ENCODE measurements at regions of chr9 and their contacts with region 1.

Region 1: DNA sequence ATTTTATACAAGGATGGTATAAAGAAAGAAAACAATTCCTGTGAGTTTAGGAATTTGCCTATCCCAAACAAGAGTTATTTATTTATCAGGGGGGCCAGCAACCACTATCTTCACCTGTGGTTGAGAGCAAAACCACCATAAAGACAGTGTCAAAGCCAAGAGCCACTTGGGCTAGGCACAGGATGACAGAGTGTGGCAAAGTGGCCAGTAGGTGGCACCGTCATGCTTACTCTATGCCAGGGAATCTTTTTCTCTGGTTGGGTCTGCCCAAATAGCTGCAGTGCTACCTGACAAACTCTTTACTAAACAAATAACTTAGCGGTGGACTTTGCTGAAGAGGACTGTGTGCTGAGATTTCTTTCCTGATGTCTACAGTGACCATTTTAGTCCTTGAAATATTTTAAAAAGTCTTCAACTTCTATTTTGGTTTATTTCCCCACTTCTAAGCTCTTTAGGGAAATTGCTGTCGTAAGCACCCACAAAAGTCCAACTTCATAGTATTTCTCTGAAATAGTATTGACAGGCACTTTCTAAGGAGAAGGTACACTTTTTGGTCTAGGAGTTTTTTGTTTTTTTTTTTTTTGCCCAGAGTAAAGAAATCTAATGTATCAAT is 285.0 kb downstream of the RFX3 start:
- DNase-seq: peak; percentile 53
- ATAC-seq: peak; percentile 84 to 88

Region 2: DNA sequence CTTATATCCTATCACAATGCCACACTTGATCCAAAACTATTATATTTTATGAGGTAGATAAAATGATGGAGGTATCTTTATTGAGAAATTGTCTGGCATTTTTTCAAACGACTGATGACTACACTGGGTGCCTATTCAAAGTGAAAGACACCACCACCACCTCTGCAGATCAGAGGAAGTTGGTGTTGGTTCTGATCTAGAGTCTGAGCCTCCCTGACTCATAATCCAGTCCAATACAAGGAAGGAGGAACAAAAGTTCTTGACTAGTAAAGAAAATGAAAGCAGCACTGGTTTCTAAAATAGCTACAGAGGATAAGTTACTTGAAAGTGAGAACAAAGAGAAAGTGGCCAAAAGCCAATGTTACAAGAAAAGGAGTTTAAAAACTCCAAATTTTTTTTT is 145.1 kb after region 1 on chr9:
- intact Hi-C with region 1: no loop called
- DNase-seq: no peak
- ATAC-seq: no peak

Region 3: GRCh38 chr9:3441197-3441816 is 200.5 kb after region 1 on chr9:
- intact Hi-C with region 1: loop called in 1 of 2 experiments (anchors 2 kb)
- DNase-seq: peak; percentile 25
- ATAC-seq: peak in 1 of 2 donors; percentile 54